ENCODE measurements at regions of chr12 and their contacts with region 1.

Region 1: DNA sequence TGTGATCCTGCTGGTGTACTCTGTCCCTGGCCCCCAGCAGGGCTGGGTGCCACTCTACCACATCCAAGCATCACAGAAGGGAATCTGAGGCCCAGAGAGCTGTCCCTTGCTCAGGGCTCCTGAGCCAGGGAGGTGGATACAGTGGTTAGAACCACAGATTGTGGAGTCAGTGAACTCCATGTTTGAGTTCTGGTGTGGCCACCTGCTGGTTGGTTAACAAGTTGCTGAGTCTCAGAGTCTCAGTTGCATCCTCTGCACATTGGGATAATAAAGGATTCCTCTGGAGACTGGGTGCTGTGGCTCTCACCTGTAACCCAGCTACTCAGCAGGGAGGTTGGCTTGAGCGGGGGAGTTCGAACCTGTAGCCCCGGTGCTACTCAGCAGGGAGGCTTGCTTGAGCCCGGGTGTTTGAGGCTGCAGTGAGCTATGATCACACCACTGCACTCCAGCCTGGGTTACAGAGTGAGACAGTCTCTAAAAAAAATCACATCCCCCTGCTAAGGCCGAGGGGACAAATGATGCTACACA is 39.4 kb downstream of the MVK start:
- DNase-seq: no peak
- H3K4me3 ChIP-seq: no peak overlapping the region
- H3K27ac ChIP-seq: no peak overlapping the region
- H3K4me1 ChIP-seq: no peaks in the 10 kb centered on the region
- H3K27me3 ChIP-seq: peaks cover 26% of the 10 kb centered on the region
- CTCF ChIP-seq: no peak
- EP300 ChIP-seq: no peak
- POLR2A ChIP-seq: no peak

Region 2: DNA sequence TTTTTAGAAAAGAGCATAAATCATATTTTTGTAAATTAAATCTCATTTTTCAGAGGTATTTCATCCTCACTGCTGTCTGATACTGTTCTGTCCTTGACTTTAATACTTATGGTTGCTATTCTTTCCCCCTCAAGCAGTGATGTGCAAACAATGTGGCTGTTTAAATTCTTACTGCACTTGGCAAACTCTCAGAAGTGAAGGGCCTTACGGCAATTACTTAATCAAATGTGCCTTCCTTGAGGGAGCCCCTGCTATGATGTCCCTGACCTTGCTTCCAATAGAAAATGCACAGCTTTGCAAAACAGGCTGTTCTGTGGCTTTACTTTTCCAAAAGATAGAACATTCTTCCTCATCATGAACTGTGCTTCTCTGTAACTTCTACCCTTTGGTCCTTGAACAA is 100.4 kb before region 1 on chr12:
- in situ Hi-C with region 1: no loop called
- intact Hi-C with region 1: no loop called
- DNase-seq: no peak
- H3K4me3 ChIP-seq: no peak overlapping the region
- H3K27ac ChIP-seq: no peak overlapping the region
- H3K4me1 ChIP-seq: no peaks in the 10 kb centered on the region
- H3K27me3 ChIP-seq: no peaks in the 10 kb centered on the region
- CTCF ChIP-seq: no peak
- EP300 ChIP-seq: no peak
- POLR2A ChIP-seq: no peak

Region 3: DNA sequence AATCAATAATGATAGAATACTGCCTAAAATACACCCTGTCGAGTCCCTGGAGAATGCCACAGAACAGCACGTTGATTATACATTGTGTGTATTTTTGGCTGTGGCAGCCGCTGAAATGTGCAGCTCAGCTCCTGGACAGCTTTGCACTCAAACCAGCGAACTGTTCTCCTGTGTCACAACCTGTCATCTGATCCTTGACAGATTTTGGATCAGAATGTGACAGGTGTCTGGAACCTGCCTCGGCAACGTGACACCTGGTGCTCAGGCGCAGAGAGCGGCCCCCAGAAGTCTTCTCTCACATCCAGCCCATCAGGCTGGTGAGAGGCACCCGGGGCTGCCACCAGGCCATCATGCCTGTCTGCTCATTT is 20.1 kb before region 1 on chr12:
- in situ Hi-C with region 1: no loop called
- intact Hi-C with region 1: loop called (anchors 1 kb)
- DNase-seq: no peak
- H3K4me3 ChIP-seq: no peak overlapping the region
- H3K27ac ChIP-seq: no peak overlapping the region
- H3K4me1 ChIP-seq: peaks cover under 1 to 2% (median 2%) of the 10 kb centered on the region in 4 donors
- H3K27me3 ChIP-seq: no peaks in the 10 kb centered on the region
- CTCF ChIP-seq: no peak
- EP300 ChIP-seq: no peak
- POLR2A ChIP-seq: no peak

Region 4: GRCh38 chr12:109626378-109627115 is 13.5 kb after region 1 on chr12:
- in situ Hi-C with region 1: no loop called
- intact Hi-C with region 1: no loop called
- DNase-seq: no peak
- H3K4me3 ChIP-seq: no peak overlapping the region
- H3K27ac ChIP-seq: no peak overlapping the region
- H3K4me1 ChIP-seq: peaks cover 0 to 7% (median 0%) of the 10 kb centered on the region in 4 donors
- H3K27me3 ChIP-seq: peaks cover 38% of the 10 kb centered on the region
- CTCF ChIP-seq: no peak
- EP300 ChIP-seq: no peak
- POLR2A ChIP-seq: no peak

Region 5: GRCh38 chr12:109695961-109696461 is 83.0 kb after region 1 on chr12:
- in situ Hi-C with region 1: no loop called
- intact Hi-C with region 1: loop called (anchors 10 kb)
- DNase-seq: no peak
- H3K4me3 ChIP-seq: no peak overlapping the region
- H3K27ac ChIP-seq: peak overlapping the region; percentile 44 to 61 (median 58)
- H3K4me1 ChIP-seq: peaks cover 8 to 11% (median 9%) of the 10 kb centered on the region in 4 donors
- H3K27me3 ChIP-seq: no peaks in the 10 kb centered on the region
- CTCF ChIP-seq: no peak
- EP300 ChIP-seq: no peak
- POLR2A ChIP-seq: no peak

Measured in transverse colon (tissue), 4 donors.